ENCODE measurements at regions of chr2 and their contacts with region 1.

Region 1: GRCh38 chr2:46929612-46930011 is 14.0 kb upstream of the MCFD2 start:
- DNase-seq: no peak
- ATAC-seq: no peak
- H3K4me3 ChIP-seq: no peak overlapping the region
- H3K27ac ChIP-seq: no peak overlapping the region
- H3K4me1 ChIP-seq: no peaks in the 10 kb centered on the region
- CTCF ChIP-seq: no peak
- EP300 ChIP-seq: no peak
- POLR2A ChIP-seq: no peak
- RAD21 ChIP-seq: no peak

Region 2: GRCh38 chr2:46915811-46916630 is 13.6 kb before region 1 on chr2:
- CTCF ChIA-PET with region 1: interaction called, 47 read pairs
- POLR2A ChIA-PET with region 1: no interaction called
- DNase-seq: peak; percentile 88 to 92
- ATAC-seq: peak; percentile 92
- H3K4me3 ChIP-seq: peak overlapping the region; percentile 80
- H3K27ac ChIP-seq: peak overlapping the region; percentile 94 to 96
- H3K4me1 ChIP-seq: peaks cover 33% of the 10 kb centered on the region
- CTCF ChIP-seq: no peak
- EP300 ChIP-seq: no peak
- POLR2A ChIP-seq: peak; percentile 69
- RAD21 ChIP-seq: no peak; a peak in 1 of 5 replicates

Region 3: GRCh38 chr2:47205576-47206141 is 276.0 kb after region 1 on chr2:
- CTCF ChIA-PET with region 1: no interaction called
- POLR2A ChIA-PET with region 1: no interaction called
- DNase-seq: no peak
- ATAC-seq: no peak
- H3K4me3 ChIP-seq: no peak overlapping the region
- H3K27ac ChIP-seq: peak overlapping the region in 1 of 2 experiments; percentile 88; a peak in 4 of 6 replicates
- H3K4me1 ChIP-seq: peaks cover 29% of the 10 kb centered on the region
- CTCF ChIP-seq: no peak
- EP300 ChIP-seq: no peak
- POLR2A ChIP-seq: no peak
- RAD21 ChIP-seq: no peak

Measured in A549 (cell line).